ENCODE measurements at regions of chr2 and their contacts with region 1.

Region 1: DNA sequence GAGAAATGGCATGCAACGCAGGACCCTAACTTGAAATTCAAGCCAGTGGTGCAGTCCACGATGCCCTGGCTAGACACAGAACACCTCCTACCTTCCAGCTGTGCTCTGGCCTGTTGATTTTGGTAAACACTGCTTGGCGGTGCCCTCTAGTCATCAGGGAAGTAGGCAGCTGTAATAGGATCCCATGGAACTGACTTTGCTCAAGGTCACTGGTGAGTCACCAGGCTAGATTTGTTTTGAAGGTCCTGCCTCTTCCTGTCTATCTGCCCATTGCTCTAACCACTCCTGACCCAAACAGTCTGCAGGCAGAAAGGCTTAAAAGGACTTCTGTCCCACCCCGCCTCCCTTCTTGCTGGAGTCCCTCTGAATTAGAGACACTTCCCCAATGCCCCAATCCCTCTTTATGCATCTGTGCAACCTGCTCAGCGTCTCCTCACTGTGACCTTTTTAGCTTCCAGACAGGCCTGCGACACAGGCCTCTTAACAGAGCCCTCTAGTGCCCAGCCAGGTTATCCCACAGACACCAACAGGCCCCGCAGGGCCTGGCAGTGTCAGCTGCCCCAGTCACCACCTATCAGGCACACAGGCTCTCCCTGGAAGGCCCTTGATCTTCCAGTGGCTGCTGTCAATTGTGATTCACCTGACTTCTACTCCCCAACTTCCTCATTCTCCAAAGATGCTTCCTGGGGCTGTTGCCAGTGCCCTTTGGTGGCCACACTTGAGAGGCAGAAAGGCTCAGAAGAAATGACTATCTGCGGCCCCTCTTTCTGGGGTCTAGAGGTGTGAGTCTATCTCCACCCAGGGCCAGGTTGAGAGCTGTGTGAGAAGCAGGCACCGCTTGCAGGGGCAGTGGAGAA is 5.2 kb downstream of the TMEM127 start:
- DNase-seq: peak; percentile 62 to 80 (median 63)
- H3K4me3 ChIP-seq: no peak overlapping the region
- H3K27ac ChIP-seq: peak overlapping the region; percentile 13 to 81
- H3K4me1 ChIP-seq: peaks cover 26% of the 10 kb centered on the region
- H3K27me3 ChIP-seq: no peaks in the 10 kb centered on the region
- CTCF ChIP-seq: peak in 1 of 3 donors; percentile 14
- EP300 ChIP-seq: no peak
- POLR2A ChIP-seq: no peak

Region 2: GRCh38 chr2:96145036-96145847 is 115.4 kb before region 1 on chr2 and contains the start of gene DUSP2:
- intact Hi-C with region 1: loop called in 2 of 4 experiments (anchors 5 to 10 kb)
- DNase-seq: peak; percentile 46 to 82 (median 63)
- H3K4me3 ChIP-seq: peak within 1 kb of the TSS; percentile 45
- H3K27ac ChIP-seq: no peak within 1 kb of the TSS
- H3K4me1 ChIP-seq: peaks cover 6% of the 10 kb centered on the region
- H3K27me3 ChIP-seq: no peaks in the 10 kb centered on the region
- CTCF ChIP-seq: no peak
- EP300 ChIP-seq: no peak
- POLR2A ChIP-seq: no peak
- total RNA-seq, gene DUSP2: 1.4 to 111 (median 3.6) TPM

Region 3: GRCh38 chr2:96208143-96209010 is 52.3 kb before region 1 on chr2 and contains the start of gene STARD7:
- intact Hi-C with region 1: loop called in 2 of 4 experiments (anchors 5 kb)
- DNase-seq: peak; percentile 97 to 99 (median 98)
- H3K4me3 ChIP-seq: peak within 1 kb of the TSS; percentile 84
- H3K27ac ChIP-seq: peak within 1 kb of the TSS; percentile 85 to 89
- H3K4me1 ChIP-seq: peaks cover 14% of the 10 kb centered on the region
- H3K27me3 ChIP-seq: no peaks in the 10 kb centered on the region
- CTCF ChIP-seq: peak in 2 of 3 donors; percentile 29 to 41
- EP300 ChIP-seq: peak; percentile 5
- POLR2A ChIP-seq: peak; percentile 88
- total RNA-seq, gene STARD7: 40.3 to 90.9 (median 80.4) TPM